Panc1 (cell line): ENCODE measurements at regions of chr6 and their contacts with region 1.

Region 1: DNA sequence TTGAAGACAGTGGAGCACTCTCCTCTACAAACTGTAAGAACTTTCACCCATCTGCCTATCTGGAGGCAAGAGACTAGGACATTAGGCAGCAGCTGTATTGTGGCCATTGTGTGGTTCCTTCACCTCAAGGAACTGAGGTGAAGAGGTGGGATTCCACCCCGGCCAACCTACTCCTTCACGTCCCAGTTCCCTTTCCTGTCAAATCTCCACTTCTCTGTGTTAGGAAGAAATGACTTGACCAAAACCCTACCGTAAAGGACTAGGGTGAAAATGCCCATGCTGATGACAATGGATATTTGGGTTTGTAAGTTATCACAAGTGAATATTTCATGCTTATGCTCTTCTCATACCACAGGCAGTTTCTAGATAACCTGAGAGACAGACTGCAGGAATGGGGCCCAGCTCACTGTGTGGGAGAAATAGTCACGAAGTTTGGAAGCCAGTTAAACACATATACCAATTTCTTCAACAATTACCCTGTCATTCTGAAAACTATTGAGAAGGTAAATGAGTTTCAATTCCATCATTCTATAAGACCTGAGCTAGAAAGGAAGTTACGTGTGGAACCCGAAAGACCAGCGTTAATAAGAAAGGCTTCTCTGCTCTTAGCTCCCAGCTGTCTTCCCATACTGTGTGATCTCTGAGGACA is 86.6 kb downstream of the ECT2L start:
- DNase-seq: no peak
- ATAC-seq: no peak
- H3K4me3 ChIP-seq: no peak overlapping the region
- H3K27ac ChIP-seq: no peak overlapping the region
- H3K4me1 ChIP-seq: no peaks in the 10 kb centered on the region
- H3K27me3 ChIP-seq: no peaks in the 10 kb centered on the region
- CTCF ChIP-seq: no peak

Region 2: DNA sequence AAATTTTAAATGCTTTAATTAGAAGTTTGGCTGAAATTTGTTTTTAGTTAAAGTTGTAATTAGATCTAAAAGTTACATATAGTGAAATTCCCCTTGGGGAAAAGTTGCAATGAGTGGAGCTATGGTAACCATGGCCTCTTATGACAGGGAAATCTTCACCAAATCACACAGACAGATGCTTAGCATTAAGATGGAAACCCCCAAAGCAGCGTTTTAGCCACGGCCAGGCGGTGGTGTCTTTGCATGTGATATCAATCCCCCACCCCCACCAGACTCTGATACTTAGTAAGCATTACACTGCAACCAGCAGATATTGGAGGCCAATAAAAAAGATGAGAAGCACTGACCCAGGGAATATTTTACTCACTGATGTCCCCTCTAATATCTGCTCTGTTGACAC is 29.8 kb after region 1 on chr6:
- CTCF ChIA-PET with region 1: no interaction called
- POLR2A ChIA-PET with region 1: interaction called, 17 read pairs
- in situ Hi-C with region 1: no loop called
- intact Hi-C with region 1: no loop called
- DNase-seq: no peak
- ATAC-seq: no peak
- H3K4me3 ChIP-seq: no peak overlapping the region
- H3K27ac ChIP-seq: no peak overlapping the region
- H3K4me1 ChIP-seq: no peaks in the 10 kb centered on the region
- H3K27me3 ChIP-seq: no peaks in the 10 kb centered on the region
- CTCF ChIP-seq: no peak